ENCODE measurements at regions of chr11 and their contacts with region 1.

Region 1: DNA sequence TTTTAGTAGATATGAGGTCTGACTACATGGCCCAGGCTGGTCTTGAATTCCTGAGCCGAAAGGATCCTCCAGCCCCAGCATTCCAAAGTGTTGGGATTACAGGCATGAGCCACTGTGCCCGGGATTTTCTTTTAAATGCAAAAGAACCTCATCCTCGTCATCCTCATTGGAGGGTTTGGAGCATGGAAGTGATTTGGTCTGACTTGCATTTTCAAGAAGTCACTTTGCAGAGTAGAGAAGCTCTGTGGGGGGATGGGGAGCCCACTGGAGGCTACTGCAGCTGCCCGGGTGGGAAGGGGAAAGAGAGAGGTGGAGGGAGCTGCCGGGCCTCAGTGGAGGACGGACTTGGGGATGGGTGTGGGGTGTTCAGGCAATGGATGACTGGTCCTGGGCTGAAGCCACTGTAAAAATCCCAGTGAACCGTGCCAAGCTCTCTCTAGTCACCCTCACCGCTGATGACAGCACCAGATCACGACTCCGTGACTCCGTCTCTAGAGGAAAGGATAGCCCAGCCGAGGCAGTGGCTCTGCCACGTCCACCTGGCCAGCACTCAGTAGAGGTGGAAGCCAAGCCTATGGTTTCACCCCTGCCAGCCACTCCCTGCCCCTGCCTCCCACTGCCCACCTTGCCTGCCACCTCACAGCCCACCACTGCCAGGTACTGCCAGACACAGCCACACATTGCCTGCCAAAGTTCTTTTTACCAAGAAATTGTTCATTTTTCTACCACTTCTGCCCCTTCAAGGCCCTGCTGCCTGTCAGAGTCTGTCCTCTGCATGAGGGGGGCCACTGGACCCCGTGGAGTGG is 32.7 kb upstream of the SLC22A12 start:
- DNase-seq: no peak
- ATAC-seq: peak; percentile 61
- H3K4me3 Mint-ChIP-seq: no peak overlapping the region
- H3K27ac Mint-ChIP-seq: peak overlapping the region; percentile 56
- H3K4me1 Mint-ChIP-seq: peaks cover 50% of the 10 kb centered on the region
- H3K27me3 Mint-ChIP-seq: peaks cover 6% of the 10 kb centered on the region
- CTCF ChIP-seq: no peak

Region 2: DNA sequence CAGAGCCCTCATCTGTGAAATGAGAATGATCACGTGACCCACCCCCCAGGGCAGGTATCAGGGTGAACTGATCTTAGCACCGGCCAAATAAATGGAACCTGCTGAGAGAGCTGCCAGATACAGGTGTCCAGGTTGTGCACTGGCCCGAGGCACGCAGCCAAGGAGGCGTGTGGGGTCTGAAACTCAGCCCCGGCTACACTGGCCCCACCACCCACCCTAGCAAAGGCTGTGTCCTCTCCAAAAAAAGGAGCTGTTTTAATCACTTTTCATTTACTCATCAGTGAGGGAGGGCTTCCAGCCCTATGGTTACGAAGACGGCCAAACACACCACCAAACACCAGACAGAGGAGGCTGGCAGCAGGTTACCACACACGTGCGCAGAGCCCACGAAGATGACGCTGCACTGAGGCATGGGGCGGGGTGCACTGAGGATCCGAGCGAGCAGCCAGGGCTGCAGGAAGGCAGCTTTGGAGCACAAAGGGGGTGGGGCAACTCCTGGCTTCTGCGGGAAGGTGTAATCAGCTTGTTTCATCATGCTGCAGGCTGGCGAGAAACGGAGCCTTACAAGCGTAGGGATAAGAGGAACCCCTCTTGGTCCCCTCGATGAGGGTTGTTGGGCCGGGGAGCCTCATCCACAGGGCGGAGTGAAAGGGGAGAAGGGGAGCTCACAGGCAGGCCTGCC is 13.2 kb after region 1 on chr11:
- CTCF ChIA-PET with region 1: interaction called, 5 read pairs
- POLR2A ChIA-PET with region 1: interaction called, 10 read pairs
- DNase-seq: peak; percentile 53
- ATAC-seq: peak; percentile 63
- H3K4me3 Mint-ChIP-seq: no peak overlapping the region
- H3K27ac Mint-ChIP-seq: no peak overlapping the region
- H3K4me1 Mint-ChIP-seq: peaks cover 22% of the 10 kb centered on the region
- H3K27me3 Mint-ChIP-seq: peaks cover 19% of the 10 kb centered on the region
- CTCF ChIP-seq: no peak